Dorsolateral prefrontal cortex (tissue), 120 donors: ENCODE measurements at regions of chr1 and their contacts with region 1.

Region 1: GRCh38 chr1:56821140-56821797 is 2.1 kb upstream of the FYB2 start:
- DNase-seq: peak; percentile 56 to 79 (median 73)
- H3K4me3 ChIP-seq: no peak overlapping the region
- H3K27ac ChIP-seq: no peak overlapping the region
- H3K27me3 ChIP-seq: peaks cover 0 to 7% (median 0%) of the 10 kb centered on the region in 45 donors
- CTCF ChIP-seq: peak; percentile 54 to 96 (median 88)

Region 2: GRCh38 chr1:55284852-55285251 is 1536.4 kb before region 1 on chr1:
- intact Hi-C with region 1: loop called in 1 of 2 experiments (anchors 5 kb)
- DNase-seq: peak in 2 of 10 donors; percentile 23 to 30
- H3K4me3 ChIP-seq: peak overlapping the region in 1 of 59 donors; percentile 7
- H3K27ac ChIP-seq: peak overlapping the region in 1 of 59 donors; percentile 53
- H3K27me3 ChIP-seq: peaks cover 0 to 10% (median 0%) of the 10 kb centered on the region in 45 donors
- CTCF ChIP-seq: peak in 54 of 56 donors; percentile 48 to 91 (median 71)

Region 3: GRCh38 chr1:57206038-57206437 is 384.8 kb after region 1 on chr1:
- intact Hi-C with region 1: no loop called
- DNase-seq: no peak
- H3K4me3 ChIP-seq: no peak overlapping the region
- H3K27ac ChIP-seq: no peak overlapping the region
- H3K27me3 ChIP-seq: peaks cover 0 to 21% (median 0%) of the 10 kb centered on the region in 45 donors
- CTCF ChIP-seq: no peak

Region 4: DNA sequence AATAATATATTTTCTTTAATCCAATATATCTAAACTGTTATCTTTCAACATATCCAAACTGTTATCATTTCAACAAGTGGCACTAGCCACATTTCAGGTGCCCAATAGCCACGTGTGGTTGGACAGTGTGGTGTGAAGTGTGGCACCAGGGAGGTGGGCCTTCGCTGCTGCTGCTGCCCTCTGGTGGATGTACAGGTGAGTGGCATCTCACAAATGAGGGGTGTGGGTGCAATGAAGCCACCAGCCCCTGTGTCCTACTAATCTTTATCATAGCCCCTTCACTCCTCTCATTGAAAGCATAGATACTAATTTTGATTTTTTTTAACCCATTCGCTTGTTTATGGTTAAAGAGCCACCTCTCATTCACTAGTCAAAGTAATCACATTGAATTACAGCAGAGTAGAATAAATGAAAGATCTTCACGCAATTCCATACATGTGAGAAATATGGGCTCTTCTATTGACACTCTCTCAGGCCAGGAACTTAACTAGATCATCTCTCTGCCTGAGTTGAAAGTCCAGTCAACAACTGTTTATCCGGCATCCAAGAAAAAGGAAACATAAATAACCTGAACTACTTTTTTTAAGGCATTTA is 1226.1 kb after region 1 on chr1:
- intact Hi-C with region 1: loop called in 1 of 2 experiments (anchors 5 kb)
- DNase-seq: peak in 1 of 10 donors; percentile 22
- H3K4me3 ChIP-seq: no peak overlapping the region
- H3K27ac ChIP-seq: no peak overlapping the region
- H3K27me3 ChIP-seq: no peaks in the 10 kb centered on the region
- CTCF ChIP-seq: peak; percentile 36 to 81 (median 71)